HAP-1 (cell line): ENCODE measurements at regions of chr1 and their contacts with region 1.

Region 1: GRCh38 chr1:39919545-39919944 is 17.8 kb upstream of the MYCL start:
- DNase-seq: peak; percentile 69 to 71
- H3K4me3 ChIP-seq: no peak overlapping the region
- H3K4me1 ChIP-seq: no peaks in the 10 kb centered on the region
- H3K27me3 ChIP-seq: no peaks in the 10 kb centered on the region

Region 2: GRCh38 chr1:39822091-39822490 is 97.5 kb before region 1 on chr1:
- in situ Hi-C with region 1: loop called (anchors 5 kb)
- DNase-seq: no peak
- H3K4me3 ChIP-seq: no peak overlapping the region
- H3K4me1 ChIP-seq: no peaks in the 10 kb centered on the region
- H3K27me3 ChIP-seq: no peaks in the 10 kb centered on the region

Region 3: DNA sequence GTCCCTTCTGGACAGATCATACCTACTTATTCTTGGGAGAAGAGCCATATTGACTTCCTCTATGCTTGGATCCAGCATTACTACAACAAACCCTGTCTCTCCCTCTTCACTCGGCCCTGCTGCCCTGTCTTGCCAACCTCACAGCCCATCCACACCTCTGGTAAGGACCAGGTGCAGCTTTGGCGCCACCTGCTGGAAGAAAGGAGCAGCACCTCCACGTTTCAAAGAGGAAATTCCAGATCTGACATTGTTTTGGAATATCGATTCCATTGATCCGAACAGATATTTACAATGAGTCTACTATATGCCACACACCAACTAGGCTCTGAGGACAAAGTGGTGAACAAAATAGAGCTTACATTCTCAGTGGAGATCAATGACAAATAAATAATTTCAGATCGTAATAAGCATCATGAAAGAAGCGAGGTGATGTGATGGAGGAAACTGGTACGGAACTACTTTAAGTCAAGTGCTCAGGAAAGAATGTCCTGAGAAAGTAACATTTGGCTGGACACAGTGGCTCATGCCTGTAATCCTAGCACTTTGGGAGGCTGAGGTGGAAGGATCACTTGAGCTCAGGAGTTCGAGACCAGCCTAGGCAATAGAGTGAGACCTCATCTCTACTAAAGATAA is 54.1 kb after region 1 on chr1:
- in situ Hi-C with region 1: loop called (anchors 5 kb)
- DNase-seq: peak; percentile 64 to 88
- H3K4me3 ChIP-seq: no peak overlapping the region
- H3K4me1 ChIP-seq: peaks cover 3% of the 10 kb centered on the region; the same call in 1 of the 2 replicates
- H3K27me3 ChIP-seq: no peaks in the 10 kb centered on the region

Region 4: DNA sequence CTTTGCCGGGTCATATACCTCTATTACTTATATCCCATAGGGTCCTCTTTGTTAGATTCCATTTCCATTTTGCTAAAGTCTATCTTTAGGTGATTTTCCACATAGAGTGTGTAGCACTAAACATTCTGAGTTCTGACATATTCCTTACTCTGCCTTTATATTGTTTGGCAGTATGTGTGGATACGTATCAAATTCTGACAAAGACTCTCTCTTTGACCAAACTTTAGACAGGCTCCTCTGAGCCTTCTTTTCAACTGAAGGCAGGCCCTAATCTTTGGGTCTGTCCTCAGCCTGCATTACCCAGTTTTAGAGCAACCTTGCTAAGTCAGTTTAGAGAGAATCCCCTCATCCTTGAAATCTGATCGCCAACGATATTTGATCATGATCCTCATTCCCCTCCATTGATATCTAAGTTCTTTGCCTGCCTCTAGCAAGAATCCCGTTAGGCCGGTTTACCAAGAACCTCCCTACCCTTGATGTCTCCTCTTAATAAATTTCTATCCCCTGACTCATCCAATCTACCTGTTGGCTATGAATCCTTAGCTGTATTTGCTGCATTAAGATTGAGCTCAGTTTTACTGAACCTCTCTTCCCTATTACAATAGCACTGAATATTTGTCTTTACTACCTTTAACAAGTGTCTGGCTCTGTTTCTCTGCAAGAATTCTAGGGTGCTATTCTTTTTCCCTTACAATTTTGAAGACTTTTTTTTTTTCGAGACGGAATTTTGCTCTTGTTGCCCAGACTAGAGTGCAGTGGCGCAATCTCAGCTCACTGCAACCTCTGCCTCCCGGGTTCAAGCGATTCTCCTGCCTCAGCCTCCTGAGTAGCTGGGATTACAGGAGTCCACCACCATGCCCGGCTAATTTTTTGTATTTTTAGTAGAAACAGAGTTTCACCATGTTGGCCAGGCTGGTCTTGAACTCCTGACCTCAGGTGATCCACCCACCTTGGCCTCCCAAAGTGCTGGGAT is 188.0 kb after region 1 on chr1:
- in situ Hi-C with region 1: no loop called
- DNase-seq: no peak
- H3K4me3 ChIP-seq: no peak overlapping the region
- H3K4me1 ChIP-seq: no peaks in the 10 kb centered on the region
- H3K27me3 ChIP-seq: no peaks in the 10 kb centered on the region